GM12878 (cell line): ENCODE measurements at regions of chr1 and their contacts with region 1.

Region 1: GRCh38 chr1:200379431-200379755 is 30.4 kb downstream of the ZNF281 start:
- DNase-seq: no peak
- ATAC-seq: no peak
- H3K4me3 ChIP-seq: no peak overlapping the region
- H3K27ac ChIP-seq: no peak overlapping the region
- H3K4me1 ChIP-seq: peaks cover 17% of the 10 kb centered on the region; the same call in 1 of the 2 replicates
- H3K27me3 ChIP-seq: no peaks in the 10 kb centered on the region
- CTCF ChIP-seq: no peak
- EP300 ChIP-seq: no peak
- POLR2A ChIP-seq: no peak
- RAD21 ChIP-seq: no peak

Region 2: GRCh38 chr1:200330741-200331430 is 48.5 kb before region 1 on chr1:
- CTCF ChIA-PET with region 1: no interaction called
- POLR2A ChIA-PET with region 1: no interaction called
- RAD21 ChIA-PET with region 1: no interaction called
- SMC1A ChIA-PET with region 1: no interaction called
- in situ Hi-C with region 1: no loop called
- intact Hi-C with region 1: no loop called
- DNase-seq: no peak
- ATAC-seq: no peak
- H3K4me3 ChIP-seq: no peak overlapping the region
- H3K27ac ChIP-seq: no peak overlapping the region
- H3K4me1 ChIP-seq: no peaks in the 10 kb centered on the region
- H3K27me3 ChIP-seq: no peaks in the 10 kb centered on the region; a peak in 2 of 4 replicates
- CTCF ChIP-seq: no peak
- EP300 ChIP-seq: no peak
- POLR2A ChIP-seq: no peak
- RAD21 ChIP-seq: no peak

Region 3: GRCh38 chr1:200351826-200352549 is 27.4 kb before region 1 on chr1:
- CTCF ChIA-PET with region 1: no interaction called
- POLR2A ChIA-PET with region 1: interaction called, 3 read pairs
- RAD21 ChIA-PET with region 1: interaction called, 4 read pairs
- SMC1A ChIA-PET with region 1: interaction called, 11 read pairs
- in situ Hi-C with region 1: no loop called
- intact Hi-C with region 1: no loop called
- DNase-seq: no peak
- ATAC-seq: peak; percentile 75
- H3K4me3 ChIP-seq: no peak overlapping the region; the same call in 1 of the 2 replicates
- H3K27ac ChIP-seq: peak overlapping the region; percentile 35; the same call in 1 of the 2 replicates
- H3K4me1 ChIP-seq: peaks cover 30% of the 10 kb centered on the region
- H3K27me3 ChIP-seq: no peaks in the 10 kb centered on the region
- CTCF ChIP-seq: no peak; a peak in 1 of 6 replicates
- EP300 ChIP-seq: no peak
- POLR2A ChIP-seq: no peak
- RAD21 ChIP-seq: no peak

Region 4: DNA sequence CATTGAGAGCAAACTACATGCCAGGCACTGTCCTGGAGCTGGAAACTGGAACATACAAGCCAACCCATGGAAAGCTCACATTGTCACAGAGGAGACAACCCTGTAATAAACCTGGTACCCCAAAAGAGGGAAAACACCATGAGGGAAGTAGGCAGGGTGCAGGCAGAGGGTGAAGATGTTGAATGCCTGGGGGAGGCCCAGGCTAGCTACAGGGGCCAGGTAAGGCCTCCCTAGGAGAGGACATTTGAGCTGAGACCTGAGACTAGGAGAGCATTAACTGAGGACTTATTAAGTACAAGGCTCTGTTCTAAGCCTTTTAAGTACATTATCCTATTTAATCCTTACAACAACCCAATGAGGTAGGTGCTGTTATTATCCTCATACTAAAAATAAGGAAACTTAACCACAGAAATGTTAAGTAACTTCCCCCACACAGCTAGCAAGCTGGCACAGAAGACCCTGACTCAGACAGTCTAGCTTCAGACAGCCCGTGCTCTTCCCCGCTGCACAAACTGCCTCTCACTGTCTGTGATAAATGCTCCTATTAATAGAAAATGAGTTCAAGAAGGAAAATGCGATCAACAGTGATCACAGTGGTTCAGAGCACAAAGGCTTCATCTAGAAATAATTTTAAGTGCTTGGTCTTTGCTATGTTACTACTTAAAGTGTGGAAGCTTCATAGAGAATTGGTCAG is 11.4 kb before region 1 on chr1:
- CTCF ChIA-PET with region 1: interaction called, 8 read pairs
- POLR2A ChIA-PET with region 1: interaction called, 3 read pairs
- RAD21 ChIA-PET with region 1: interaction called, 3 read pairs
- SMC1A ChIA-PET with region 1: interaction called, 13 read pairs
- in situ Hi-C with region 1: no loop called
- intact Hi-C with region 1: no loop called
- DNase-seq: no peak
- ATAC-seq: no peak
- H3K4me3 ChIP-seq: no peak overlapping the region
- H3K27ac ChIP-seq: no peak overlapping the region
- H3K4me1 ChIP-seq: 0 out of 2 replicates have a peak, but pooled peaks cover 3% of the 10 kb centered on the region
- H3K27me3 ChIP-seq: no peaks in the 10 kb centered on the region
- CTCF ChIP-seq: no peak
- EP300 ChIP-seq: no peak
- POLR2A ChIP-seq: no peak
- RAD21 ChIP-seq: no peak

Region 5: GRCh38 chr1:200392625-200393185 is 13.3 kb after region 1 on chr1:
- CTCF ChIA-PET with region 1: no interaction called
- POLR2A ChIA-PET with region 1: interaction called, 3 read pairs
- RAD21 ChIA-PET with region 1: no interaction called
- SMC1A ChIA-PET with region 1: interaction called, 11 read pairs
- in situ Hi-C with region 1: no loop called
- intact Hi-C with region 1: no loop called
- DNase-seq: no peak
- ATAC-seq: no peak
- H3K4me3 ChIP-seq: no peak overlapping the region
- H3K27ac ChIP-seq: no peak overlapping the region
- H3K4me1 ChIP-seq: no peaks in the 10 kb centered on the region
- H3K27me3 ChIP-seq: no peaks in the 10 kb centered on the region
- CTCF ChIP-seq: no peak
- EP300 ChIP-seq: no peak
- POLR2A ChIP-seq: no peak
- RAD21 ChIP-seq: no peak